ENCODE measurements at regions of chr1 and their contacts with region 1.

Region 1: GRCh38 chr1:175319418-175320230 is 127.0 kb upstream of the KIAA0040 start:
- DNase-seq: peak; percentile 80
- H3K4me3 Mint-ChIP-seq: no peak overlapping the region
- H3K27ac Mint-ChIP-seq: no peak overlapping the region
- H3K4me1 Mint-ChIP-seq: peaks cover 12% of the 10 kb centered on the region
- H3K27me3 Mint-ChIP-seq: no peaks in the 10 kb centered on the region

Region 2: GRCh38 chr1:175146529-175147213 is 173.0 kb before region 1 on chr1:
- CTCF ChIA-PET with region 1: interaction called, 261 read pairs
- intact Hi-C with region 1: no loop called
- DNase-seq: peak; percentile 80
- H3K4me3 Mint-ChIP-seq: no peak overlapping the region
- H3K27ac Mint-ChIP-seq: no peak overlapping the region
- H3K4me1 Mint-ChIP-seq: peaks cover 2% of the 10 kb centered on the region
- H3K27me3 Mint-ChIP-seq: peaks cover 13% of the 10 kb centered on the region

Region 3: GRCh38 chr1:175192630-175193526 is 126.7 kb before region 1 on chr1 and contains the start of gene KIAA0040:
- CTCF ChIA-PET with region 1: interaction called, 18 read pairs
- intact Hi-C with region 1: loop called (anchors 1 kb)
- DNase-seq: peak; percentile 63
- H3K4me3 Mint-ChIP-seq: peak within 1 kb of the TSS; percentile 92
- H3K27ac Mint-ChIP-seq: peak within 1 kb of the TSS; percentile 93
- H3K4me1 Mint-ChIP-seq: peaks cover 45% of the 10 kb centered on the region
- H3K27me3 Mint-ChIP-seq: no peaks in the 10 kb centered on the region
- total RNA-seq, gene KIAA0040: 19.5 to 21.4 TPM

Region 4: GRCh38 chr1:175338387-175339135 is 18.9 kb after region 1 on chr1:
- CTCF ChIA-PET with region 1: interaction called, 52 read pairs
- intact Hi-C with region 1: no loop called
- DNase-seq: peak; percentile 76
- H3K4me3 Mint-ChIP-seq: no peak overlapping the region
- H3K27ac Mint-ChIP-seq: no peak overlapping the region
- H3K4me1 Mint-ChIP-seq: peaks cover 2% of the 10 kb centered on the region
- H3K27me3 Mint-ChIP-seq: no peaks in the 10 kb centered on the region

Region 5: GRCh38 chr1:175514387-175514953 is 194.8 kb after region 1 on chr1:
- CTCF ChIA-PET with region 1: no interaction called
- intact Hi-C with region 1: no loop called
- DNase-seq: peak; percentile 9
- H3K4me3 Mint-ChIP-seq: no peak overlapping the region
- H3K27ac Mint-ChIP-seq: no peak overlapping the region
- H3K4me1 Mint-ChIP-seq: no peaks in the 10 kb centered on the region
- H3K27me3 Mint-ChIP-seq: peaks cover 33% of the 10 kb centered on the region